ENCODE measurements at regions of chr18 and their contacts with region 1.

Region 1: DNA sequence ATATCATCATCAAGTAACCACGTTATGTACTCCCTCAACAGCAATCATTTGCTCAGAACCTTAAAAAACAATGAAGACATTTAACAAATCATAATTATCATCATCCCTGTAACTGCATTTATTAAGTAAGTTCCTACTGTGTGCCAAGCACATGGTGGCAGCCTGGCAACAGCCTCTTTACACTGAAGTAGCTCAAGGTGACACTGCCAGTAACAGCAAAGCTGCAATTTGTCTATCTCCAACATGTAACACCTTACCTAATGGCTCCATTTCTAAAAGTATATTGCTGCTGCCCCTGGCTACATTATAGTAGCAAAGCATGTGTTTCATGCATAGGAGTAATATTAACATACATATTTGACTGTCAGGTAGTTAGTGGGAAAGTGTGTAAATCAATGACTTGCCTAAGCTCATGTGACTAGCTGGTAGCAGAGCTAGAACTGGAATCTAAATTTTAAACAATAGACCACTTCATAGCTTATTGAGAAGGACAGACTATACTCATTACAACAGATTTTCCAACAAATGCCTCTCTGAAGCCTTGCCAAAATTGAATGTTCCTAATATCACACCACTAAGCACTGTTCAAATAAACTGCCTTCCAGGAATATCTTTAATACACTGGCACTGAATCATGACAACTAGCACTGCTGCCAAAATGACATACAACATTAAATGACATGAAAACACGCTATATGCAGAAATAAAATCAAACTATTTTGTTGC is 86.7 kb downstream of the L3MBTL4 start:
- DNase-seq: no peak
- ATAC-seq: no peak
- H3K4me3 Mint-ChIP-seq: no peak overlapping the region
- H3K27ac Mint-ChIP-seq: no peak overlapping the region
- H3K4me1 Mint-ChIP-seq: no peaks in the 10 kb centered on the region
- H3K27me3 Mint-ChIP-seq: no peaks in the 10 kb centered on the region

Region 2: DNA sequence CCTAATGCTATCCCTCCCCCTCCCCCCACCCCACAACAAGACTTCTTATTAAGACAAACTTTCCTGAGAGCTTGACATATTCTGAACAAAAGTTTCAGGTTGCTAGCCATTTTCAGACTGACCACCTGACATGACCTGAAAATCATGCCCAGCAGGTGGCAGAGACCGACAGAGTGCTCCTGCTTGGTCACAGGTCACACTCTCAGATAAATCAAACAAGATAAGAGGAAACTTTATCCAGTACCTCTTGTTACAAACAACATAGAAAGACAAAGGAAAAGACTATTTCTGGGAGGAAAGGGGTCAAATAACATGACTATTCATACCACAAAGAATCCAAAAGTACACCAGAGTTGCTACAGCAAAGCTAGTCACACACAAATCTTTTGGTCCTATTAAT is 540.1 kb before region 1 on chr18:
- CTCF ChIA-PET with region 1: no interaction called
- POLR2A ChIA-PET with region 1: no interaction called
- intact Hi-C with region 1: no loop called
- DNase-seq: no peak
- ATAC-seq: no peak
- H3K4me3 Mint-ChIP-seq: no peak overlapping the region
- H3K27ac Mint-ChIP-seq: no peak overlapping the region
- H3K4me1 Mint-ChIP-seq: no peaks in the 10 kb centered on the region
- H3K27me3 Mint-ChIP-seq: peaks cover 6% of the 10 kb centered on the region

Region 3: GRCh38 chr18:6279308-6279707 is 48.8 kb before region 1 on chr18:
- CTCF ChIA-PET with region 1: no interaction called
- POLR2A ChIA-PET with region 1: no interaction called
- intact Hi-C with region 1: loop called in 1 of 2 experiments (anchors 5 kb)
- DNase-seq: no peak
- ATAC-seq: no peak
- H3K4me3 Mint-ChIP-seq: no peak overlapping the region
- H3K27ac Mint-ChIP-seq: no peak overlapping the region
- H3K4me1 Mint-ChIP-seq: no peaks in the 10 kb centered on the region
- H3K27me3 Mint-ChIP-seq: no peaks in the 10 kb centered on the region

Region 4: GRCh38 chr18:6566338-6566911 is 238.4 kb after region 1 on chr18:
- CTCF ChIA-PET with region 1: no interaction called
- POLR2A ChIA-PET with region 1: no interaction called
- intact Hi-C with region 1: no loop called
- DNase-seq: no peak
- ATAC-seq: peak; percentile 58
- H3K4me3 Mint-ChIP-seq: no peak overlapping the region
- H3K27ac Mint-ChIP-seq: no peak overlapping the region
- H3K4me1 Mint-ChIP-seq: no peaks in the 10 kb centered on the region
- H3K27me3 Mint-ChIP-seq: peaks cover 7% of the 10 kb centered on the region

Measured in activated CD4-positive, alpha-beta T cell treated with anti-CD3 and anti-CD28 coated beads for 36 hours (primary cell).